ENCODE measurements at regions of chr20 and their contacts with region 1.

Region 1: DNA sequence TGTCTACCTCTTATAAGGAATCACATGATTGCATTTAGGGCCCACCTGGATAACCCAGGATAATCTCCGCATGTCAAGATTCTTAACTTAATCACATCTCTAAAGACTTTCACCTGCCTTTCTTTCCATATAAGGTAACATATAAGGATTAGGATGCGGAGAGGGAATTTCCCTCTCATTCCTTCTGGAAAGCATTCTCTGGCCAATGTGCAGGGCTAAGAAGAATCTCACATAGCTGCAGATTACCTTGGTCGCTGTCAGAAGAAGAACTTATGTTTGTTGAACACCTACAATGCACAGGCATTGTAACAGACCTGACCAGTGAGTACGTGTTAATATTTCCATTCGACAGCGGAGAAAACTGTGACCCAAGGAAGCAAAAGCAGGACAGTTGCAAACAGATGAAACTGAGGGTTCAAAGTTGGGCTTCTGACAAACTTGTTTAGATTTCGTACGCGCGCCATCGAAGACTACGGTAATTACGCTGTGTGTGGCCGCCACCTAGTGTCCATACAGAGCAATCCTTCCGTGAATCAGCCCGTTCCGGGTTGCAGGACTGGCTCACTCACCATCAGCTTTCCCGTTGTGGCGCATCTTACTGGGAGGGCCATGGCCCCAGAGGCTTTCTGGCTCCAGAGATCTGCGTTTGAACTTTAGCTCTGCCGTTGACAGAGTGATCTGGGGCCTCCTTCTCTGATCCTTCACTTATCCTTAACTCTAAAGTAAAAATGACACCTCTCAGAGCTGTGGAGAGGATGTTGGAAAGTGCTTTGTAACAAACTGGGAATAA is 9.5 kb downstream of the C20orf202 start:
- DNase-seq: no peak
- H3K4me3 ChIP-seq: no peak overlapping the region
- H3K27ac ChIP-seq: no peak overlapping the region
- H3K4me1 ChIP-seq: peaks cover 0 to 9% (median 3%) of the 10 kb centered on the region in 4 donors
- H3K27me3 ChIP-seq: peaks cover 0 to 56% (median 0%) of the 10 kb centered on the region in 4 donors
- CTCF ChIP-seq: peak; percentile 58 to 85 (median 63)
- EP300 ChIP-seq: no peak
- POLR2A ChIP-seq: no peak

Region 2: GRCh38 chr20:815914-816606 is 396.7 kb before region 1 on chr20:
- intact Hi-C with region 1: loop called (anchors 5 kb)
- DNase-seq: no peak
- H3K4me3 ChIP-seq: no peak overlapping the region
- H3K27ac ChIP-seq: no peak overlapping the region
- H3K4me1 ChIP-seq: peaks cover 0 to 6% (median 5%) of the 10 kb centered on the region in 4 donors
- H3K27me3 ChIP-seq: peaks cover 0 to 54% (median 2%) of the 10 kb centered on the region in 4 donors
- CTCF ChIP-seq: peak; percentile 95 to 99 (median 97)
- EP300 ChIP-seq: no peak
- POLR2A ChIP-seq: no peak

Region 3: DNA sequence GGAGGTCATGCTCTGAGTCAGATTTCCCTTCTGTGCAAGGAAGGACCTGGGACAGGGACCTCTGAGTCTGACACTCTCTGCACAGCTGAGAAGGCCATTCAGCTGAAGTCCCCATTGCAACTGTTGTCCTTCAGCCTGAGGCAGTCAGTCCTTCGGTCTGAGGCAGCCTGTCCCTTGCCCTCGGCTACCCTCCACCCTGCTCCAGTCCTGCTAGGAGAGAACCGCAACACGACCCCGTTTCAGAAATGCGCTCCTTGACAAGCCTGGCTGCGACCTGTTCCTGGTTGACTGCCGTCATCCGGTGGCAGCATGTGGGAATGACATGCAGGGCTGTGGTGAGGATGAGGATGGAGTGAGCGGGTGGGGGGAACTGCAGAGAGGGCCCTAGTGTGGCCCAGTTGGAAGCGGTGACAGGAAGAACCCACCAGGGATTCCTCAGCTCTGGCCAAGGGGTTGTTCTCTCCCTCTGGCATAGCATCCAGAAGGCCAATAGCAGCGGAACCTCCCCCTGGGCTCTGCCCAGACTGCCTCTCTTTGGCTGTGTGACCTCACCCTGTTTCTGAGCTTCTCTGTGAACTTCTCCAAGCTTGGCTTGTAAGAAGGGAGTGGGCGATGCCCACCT is 256.4 kb before region 1 on chr20:
- intact Hi-C with region 1: loop called (anchors 10 kb)
- DNase-seq: no peak
- H3K4me3 ChIP-seq: no peak overlapping the region
- H3K27ac ChIP-seq: no peak overlapping the region
- H3K4me1 ChIP-seq: peaks cover 3 to 6% (median 4%) of the 10 kb centered on the region in 4 donors
- H3K27me3 ChIP-seq: peaks cover 0 to 85% (median 14%) of the 10 kb centered on the region in 4 donors
- CTCF ChIP-seq: peak; percentile 89 to 95 (median 89)
- EP300 ChIP-seq: no peak
- POLR2A ChIP-seq: no peak

Region 4: DNA sequence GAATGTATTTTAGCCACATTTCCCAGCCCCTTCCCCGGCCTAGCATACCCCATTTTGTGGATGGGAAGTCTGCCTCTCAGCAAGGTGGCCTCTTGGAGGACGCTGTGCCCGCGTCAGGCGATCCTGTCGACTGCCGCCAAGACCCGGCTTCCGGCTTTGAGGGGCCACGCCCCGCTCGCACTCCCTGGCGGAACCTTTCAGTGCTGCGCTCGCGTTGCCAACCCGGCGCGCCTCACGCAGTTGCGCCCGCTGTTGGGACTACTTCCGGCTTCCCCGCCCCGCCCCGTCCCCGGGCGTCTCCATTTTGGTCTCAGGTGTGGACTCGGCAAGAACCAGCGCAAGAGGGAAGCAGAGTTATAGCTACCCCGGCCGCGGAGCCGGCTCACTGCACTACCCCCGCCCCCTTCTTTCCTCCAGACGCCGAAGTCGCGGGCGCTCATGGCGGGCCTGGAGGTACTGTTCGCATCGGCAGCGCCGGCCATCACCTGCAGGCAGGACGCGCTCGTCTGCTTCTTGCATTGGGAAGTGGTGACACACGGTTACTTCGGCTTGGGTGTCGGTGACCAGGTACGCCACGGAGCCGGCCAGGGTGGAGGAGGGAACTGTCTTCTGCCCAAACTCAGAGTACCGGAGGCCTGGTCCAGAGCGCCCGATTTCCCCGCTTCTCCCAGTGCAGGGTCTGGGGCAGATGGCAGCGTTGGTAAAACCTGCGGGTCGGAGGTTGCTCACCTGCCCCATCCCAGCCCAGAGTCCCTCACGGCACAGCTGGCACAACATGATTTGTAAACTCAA is 94.3 kb before region 1 on chr20 and contains the start of gene PSMF1:
- intact Hi-C with region 1: loop called (anchors 5 kb)
- DNase-seq: peak; percentile 98
- H3K4me3 ChIP-seq: peak within 1 kb of the TSS; percentile 81 to 99 (median 89)
- H3K27ac ChIP-seq: peak within 1 kb of the TSS; percentile 75 to 83 (median 82)
- H3K4me1 ChIP-seq: peaks cover 51 to 54% (median 54%) of the 10 kb centered on the region in 4 donors
- H3K27me3 ChIP-seq: no peaks in the 10 kb centered on the region
- CTCF ChIP-seq: peak in 1 of 3 experiments; percentile 36
- EP300 ChIP-seq: no peak
- POLR2A ChIP-seq: no peak
- total RNA-seq, gene PSMF1: 65.4 to 91.5 (median 73.4) TPM

Region 5: DNA sequence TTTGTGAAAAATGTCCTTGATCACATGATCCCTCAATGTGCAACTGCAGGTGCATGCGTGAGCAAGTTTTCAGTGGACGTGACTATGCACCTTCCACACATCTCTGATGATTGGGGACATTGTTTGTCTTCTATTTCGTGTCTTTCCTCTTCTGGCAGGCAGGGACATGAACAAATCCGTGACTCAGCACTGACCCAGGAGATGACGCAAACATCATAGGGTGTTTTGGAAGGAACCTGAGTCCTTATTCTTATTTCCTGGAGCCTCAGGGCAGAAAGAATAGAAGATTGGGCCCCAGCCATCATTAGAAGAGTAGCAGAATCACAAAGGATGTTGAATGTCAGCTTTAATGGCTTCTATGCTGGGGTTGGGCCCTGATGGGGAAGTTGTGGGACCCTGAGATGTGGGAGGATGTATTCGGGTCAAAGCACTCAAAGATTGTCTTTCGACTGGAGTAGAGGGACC is 356.6 kb after region 1 on chr20:
- intact Hi-C with region 1: no loop called
- DNase-seq: no peak
- H3K4me3 ChIP-seq: no peak overlapping the region
- H3K27ac ChIP-seq: no peak overlapping the region
- H3K4me1 ChIP-seq: no peaks in the 10 kb centered on the region
- H3K27me3 ChIP-seq: peaks cover 0 to 7% (median 0%) of the 10 kb centered on the region in 4 donors
- CTCF ChIP-seq: no peak
- EP300 ChIP-seq: no peak
- POLR2A ChIP-seq: no peak